ENCODE measurements at regions of chr5 and their contacts with region 1.

Region 1: DNA sequence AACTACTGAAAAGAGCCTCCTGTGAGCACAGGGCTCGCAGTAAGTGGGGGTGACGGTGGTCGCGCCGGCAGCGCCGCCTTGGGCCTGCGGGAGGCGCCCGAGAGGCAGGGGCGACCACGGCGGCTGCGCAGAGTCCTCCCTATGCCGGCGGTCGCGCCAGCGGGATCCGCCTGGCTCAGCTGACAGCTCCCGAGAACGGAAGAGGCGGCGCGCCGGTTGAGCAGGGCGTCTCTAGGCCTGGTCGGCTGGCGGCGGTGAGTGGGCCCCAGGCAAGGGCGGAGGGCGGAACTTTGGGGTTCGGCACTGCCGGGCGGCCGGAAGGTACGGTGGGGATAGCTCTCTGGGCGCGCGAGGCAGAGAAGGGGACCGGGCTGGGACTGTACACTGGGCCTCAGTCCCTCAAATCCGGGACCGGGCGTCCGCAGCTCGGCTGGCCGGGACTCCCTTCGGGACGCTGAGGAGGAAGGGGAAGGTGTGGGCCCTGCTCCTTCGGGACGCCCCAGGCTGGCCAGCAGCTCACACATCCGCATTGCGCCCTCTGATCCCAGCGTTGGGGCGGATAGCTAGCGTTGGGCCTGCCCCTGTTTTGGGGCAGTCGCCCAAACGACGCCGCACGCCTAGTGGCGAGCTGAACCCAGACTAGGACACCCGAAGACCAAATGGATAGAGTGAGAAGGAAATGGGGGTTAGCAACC is at the start of gene RNF14:
- DNase-seq: peak; percentile 96
- H3K4me3 Mint-ChIP-seq: peak within 1 kb of the TSS; percentile 80
- H3K27ac Mint-ChIP-seq: peak within 1 kb of the TSS; percentile 97
- H3K4me1 Mint-ChIP-seq: peaks cover 35% of the 10 kb centered on the region
- H3K27me3 Mint-ChIP-seq: peaks cover 5% of the 10 kb centered on the region

Region 2: DNA sequence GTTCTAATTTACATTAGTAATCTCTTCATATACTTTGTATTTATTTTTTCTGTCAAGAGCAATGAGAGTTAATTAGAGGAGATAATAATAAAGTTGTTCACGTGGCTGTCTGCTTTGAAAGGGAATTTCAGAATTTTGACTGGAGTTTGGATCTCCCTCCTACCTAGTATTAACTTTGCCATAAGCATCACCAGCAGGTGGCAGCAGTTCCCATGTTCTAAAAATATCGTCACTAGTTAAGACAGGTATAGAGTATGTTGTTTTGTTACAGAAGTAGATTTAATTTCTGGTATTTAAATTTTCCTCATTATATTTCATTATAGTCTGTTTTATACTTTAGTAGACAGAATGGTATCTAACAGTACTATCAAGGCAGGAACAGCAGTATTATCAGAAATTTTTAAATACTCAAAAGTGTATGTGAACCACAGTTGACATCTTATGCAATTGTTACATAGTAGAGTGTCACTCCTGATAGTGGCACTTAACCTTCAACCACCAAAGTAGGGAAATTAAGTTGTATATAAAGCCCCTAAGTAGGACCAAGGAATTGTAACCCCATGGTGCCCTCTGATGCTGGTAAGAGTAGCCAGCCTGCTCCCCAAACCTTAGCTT is 23.4 kb after region 1 on chr5:
- CTCF ChIA-PET with region 1: interaction called, 10 read pairs
- DNase-seq: peak; percentile 87
- H3K4me3 Mint-ChIP-seq: no peak overlapping the region
- H3K27ac Mint-ChIP-seq: no peak overlapping the region
- H3K4me1 Mint-ChIP-seq: no peaks in the 10 kb centered on the region
- H3K27me3 Mint-ChIP-seq: no peaks in the 10 kb centered on the region

Region 3: GRCh38 chr5:142006363-142007236 is 37.5 kb after region 1 on chr5:
- CTCF ChIA-PET with region 1: interaction called, 10 read pairs
- DNase-seq: peak; percentile 56
- H3K4me3 Mint-ChIP-seq: peak overlapping the region; percentile 53
- H3K27ac Mint-ChIP-seq: peak overlapping the region; percentile 94
- H3K4me1 Mint-ChIP-seq: peaks cover 84% of the 10 kb centered on the region
- H3K27me3 Mint-ChIP-seq: no peaks in the 10 kb centered on the region